MCF 10A (cell line): ENCODE measurements at regions of chr6 and their contacts with region 1.

Region 1: GRCh38 chr6:137866914-137867684 is at the start of gene TNFAIP3:
- DNase-seq: peak; percentile 96
- H3K4me3 Mint-ChIP-seq: peak within 1 kb of the TSS; percentile 72
- H3K27ac Mint-ChIP-seq: peak within 1 kb of the TSS; percentile 89
- H3K4me1 Mint-ChIP-seq: peaks cover 17% of the 10 kb centered on the region
- H3K27me3 Mint-ChIP-seq: no peaks in the 10 kb centered on the region
- CTCF ChIP-seq: peak; percentile 74
- total RNA-seq, gene TNFAIP3: 38.2 and 52.8 TPM in 2 replicates

Region 2: DNA sequence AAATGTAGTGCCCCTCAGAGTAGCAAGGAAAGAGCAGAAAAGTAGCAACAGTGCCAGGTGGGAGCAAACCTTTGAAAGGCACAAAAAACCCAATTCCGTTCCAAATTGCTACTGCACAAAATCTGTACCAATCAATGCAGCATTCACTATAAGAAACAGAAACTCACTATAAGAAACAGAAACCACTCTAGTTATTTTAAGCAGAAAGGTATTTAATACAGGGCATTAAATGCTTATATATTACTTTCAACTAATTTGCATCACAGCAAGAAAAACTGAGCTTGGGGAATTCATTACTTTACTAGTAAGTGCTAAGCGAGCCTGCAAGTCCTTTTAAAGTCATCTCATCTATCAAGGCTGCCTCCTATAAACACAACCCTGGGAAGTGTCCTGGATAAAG is 256.4 kb before region 1 on chr6:
- CTCF ChIA-PET with region 1: no interaction called
- POLR2A ChIA-PET with region 1: no interaction called
- intact Hi-C with region 1: no loop called
- DNase-seq: no peak
- H3K4me3 Mint-ChIP-seq: no peak overlapping the region
- H3K27ac Mint-ChIP-seq: no peak overlapping the region
- H3K4me1 Mint-ChIP-seq: no peaks in the 10 kb centered on the region
- H3K27me3 Mint-ChIP-seq: peaks cover 7% of the 10 kb centered on the region
- CTCF ChIP-seq: no peak

Region 3: DNA sequence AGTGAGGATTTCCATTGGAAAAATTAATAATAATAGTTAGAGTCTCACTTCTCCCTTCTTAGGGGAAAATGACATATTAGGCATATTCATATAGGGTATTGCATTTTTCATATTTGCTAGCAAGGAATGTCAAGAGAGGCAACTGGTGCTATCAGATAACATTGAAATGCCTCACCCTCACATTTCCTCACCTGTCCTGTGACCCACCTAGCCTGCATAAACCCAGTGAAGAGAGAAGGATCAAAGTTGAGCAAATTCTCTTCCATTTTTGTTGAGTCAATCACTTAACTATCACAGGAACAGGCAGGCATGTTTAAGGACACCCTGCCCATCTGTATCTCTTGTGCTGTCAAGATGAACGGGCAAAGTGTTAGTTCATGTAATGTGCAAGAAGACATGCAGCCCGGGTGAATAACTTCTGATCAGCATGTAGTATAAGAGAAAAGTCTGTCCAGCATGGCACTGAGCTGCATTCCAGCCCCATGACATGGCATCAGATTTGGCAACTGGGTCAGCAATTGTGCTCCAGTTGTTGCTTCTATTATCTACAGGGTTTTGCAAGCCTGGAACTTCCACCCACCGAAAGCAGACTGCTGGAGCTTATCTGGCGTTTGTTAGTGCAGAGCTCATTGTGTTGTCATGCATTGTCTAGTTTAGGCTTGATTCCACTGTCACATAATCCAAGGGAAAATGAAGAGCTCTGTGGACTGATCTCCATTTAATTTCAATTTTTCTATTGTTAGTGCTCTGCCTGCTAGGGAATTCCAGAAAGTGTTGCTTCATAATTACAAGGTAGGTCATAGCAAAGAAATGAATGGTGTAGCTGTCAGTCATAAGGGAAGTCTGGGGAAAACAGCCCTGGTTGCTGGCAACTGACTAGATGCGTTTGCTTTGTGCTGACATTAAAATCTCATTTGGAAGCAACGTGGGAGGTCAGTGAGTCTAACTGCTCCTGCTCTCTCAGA is 138.4 kb before region 1 on chr6:
- CTCF ChIA-PET with region 1: interaction called, 12 read pairs
- POLR2A ChIA-PET with region 1: interaction called, 43 read pairs
- intact Hi-C with region 1: loop called (anchors 2 kb)
- DNase-seq: peak; percentile 95
- H3K4me3 Mint-ChIP-seq: peak overlapping the region; percentile 22
- H3K27ac Mint-ChIP-seq: peak overlapping the region; percentile 73
- H3K4me1 Mint-ChIP-seq: peaks cover 37% of the 10 kb centered on the region
- H3K27me3 Mint-ChIP-seq: no peaks in the 10 kb centered on the region
- CTCF ChIP-seq: no peak

Region 4: GRCh38 chr6:137811121-137811915 is 55.8 kb before region 1 on chr6:
- CTCF ChIA-PET with region 1: interaction called, 13 read pairs
- POLR2A ChIA-PET with region 1: interaction called, 127 read pairs
- intact Hi-C with region 1: no loop called
- DNase-seq: peak; percentile 92
- H3K4me3 Mint-ChIP-seq: peak overlapping the region; percentile 58
- H3K27ac Mint-ChIP-seq: peak overlapping the region; percentile 94
- H3K4me1 Mint-ChIP-seq: peaks cover 55% of the 10 kb centered on the region
- H3K27me3 Mint-ChIP-seq: no peaks in the 10 kb centered on the region
- CTCF ChIP-seq: no peak

Region 5: GRCh38 chr6:137933696-137934095 is 66.6 kb after region 1 on chr6:
- CTCF ChIA-PET with region 1: interaction called, 29 read pairs
- POLR2A ChIA-PET with region 1: interaction called, 43 read pairs
- intact Hi-C with region 1: no loop called
- DNase-seq: peak; percentile 72
- H3K4me3 Mint-ChIP-seq: no peak overlapping the region
- H3K27ac Mint-ChIP-seq: peak overlapping the region; percentile 79
- H3K4me1 Mint-ChIP-seq: peaks cover 11% of the 10 kb centered on the region
- H3K27me3 Mint-ChIP-seq: no peaks in the 10 kb centered on the region
- CTCF ChIP-seq: no peak

Region 6: GRCh38 chr6:137975188-137975940 is 108.3 kb after region 1 on chr6:
- CTCF ChIA-PET with region 1: interaction called, 5 read pairs
- POLR2A ChIA-PET with region 1: interaction called, 4 read pairs
- intact Hi-C with region 1: loop called (anchors 1 kb)
- DNase-seq: peak; percentile 29
- H3K4me3 Mint-ChIP-seq: no peak overlapping the region
- H3K27ac Mint-ChIP-seq: no peak overlapping the region
- H3K4me1 Mint-ChIP-seq: peaks cover 11% of the 10 kb centered on the region
- H3K27me3 Mint-ChIP-seq: no peaks in the 10 kb centered on the region
- CTCF ChIP-seq: peak; percentile 53